Naive thymus-derived CD4-positive, alpha-beta T cell (primary cell): ENCODE measurements at regions of chr3 and their contacts with region 1.

Region 1: GRCh38 chr3:49723628-49724551 is at the start of gene GMPPB:
- DNase-seq: peak; percentile 83 to 95 (median 87)
- ATAC-seq: peak; percentile 85
- H3K4me3 ChIP-seq: peak within 1 kb of the TSS; percentile 89
- H3K4me3 Mint-ChIP-seq: peak within 1 kb of the TSS; percentile 91 to 98 (median 96)
- H3K27ac ChIP-seq: peak within 1 kb of the TSS; percentile 96
- H3K27ac Mint-ChIP-seq: peak within 1 kb of the TSS; percentile 82 to 99 (median 97)
- H3K4me1 ChIP-seq: peaks cover 11 to 17% of the 10 kb centered on the region in 2 donors
- H3K4me1 Mint-ChIP-seq: peaks cover 12 to 37% (median 31%) of the 10 kb centered on the region in 7 donors
- H3K27me3 ChIP-seq: no peaks in the 10 kb centered on the region
- H3K27me3 Mint-ChIP-seq: no peaks in the 10 kb centered on the region
- total RNA-seq, gene GMPPB: 38.3 to 60.4 (median 43.9) TPM

Region 2: GRCh38 chr3:49689046-49689907 is 34.6 kb before region 1 on chr3 and contains the starts of genes MST1 and RNF123:
- CTCF ChIA-PET with region 1: no interaction called
- POLR2A ChIA-PET with region 1: interaction called, 3 read pairs
- intact Hi-C with region 1: loop called (anchors 1 to 5 kb)
- DNase-seq: peak; percentile 89 to 96 (median 93)
- ATAC-seq: peak; percentile 91
- H3K4me3 ChIP-seq: peak within 1 kb of the TSS; percentile 97
- H3K4me3 Mint-ChIP-seq: peak within 1 kb of the TSS; percentile 84 to 99 (median 96)
- H3K27ac ChIP-seq: peak within 1 kb of the TSS; percentile 82
- H3K27ac Mint-ChIP-seq: peak within 1 kb of the TSS; percentile 87 to 99 (median 95)
- H3K4me1 ChIP-seq: peaks cover 6 to 13% of the 10 kb centered on the region in 2 donors
- H3K4me1 Mint-ChIP-seq: peaks cover 20 to 54% (median 41%) of the 10 kb centered on the region in 7 donors
- H3K27me3 ChIP-seq: no peaks in the 10 kb centered on the region
- H3K27me3 Mint-ChIP-seq: peaks cover 0 to 5% (median 0%) of the 10 kb centered on the region in 5 donors
- total RNA-seq, gene MST1: 7.9 to 12.8 (median 10.0) TPM
- total RNA-seq, gene RNF123: 34.5 to 77.2 (median 50.7) TPM

Region 3: DNA sequence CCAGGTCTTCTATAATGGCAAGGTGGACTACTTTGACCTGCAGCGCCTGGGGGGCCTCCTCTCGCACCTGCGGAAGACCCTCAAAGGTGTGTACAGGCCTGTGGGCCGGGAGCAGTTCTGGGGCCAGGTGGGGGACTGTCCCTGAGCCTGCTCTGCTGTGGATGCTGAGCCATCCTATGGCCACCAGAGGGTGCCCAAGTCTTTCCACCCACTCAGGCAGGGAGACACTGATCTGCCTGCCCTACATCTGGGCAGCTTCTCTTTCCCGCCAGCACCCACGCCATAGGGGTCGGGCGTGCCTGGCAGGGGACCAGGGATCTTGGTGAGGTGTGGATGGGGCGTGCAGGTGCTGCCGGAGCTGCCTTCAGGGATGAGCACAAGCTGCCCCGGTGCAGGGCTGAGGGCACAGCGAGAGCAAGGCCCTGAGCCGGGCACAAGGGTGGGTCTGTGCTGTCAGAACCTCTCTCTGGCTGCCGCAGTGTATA is 20.4 kb before region 1 on chr3:
- CTCF ChIA-PET with region 1: interaction called, 3 read pairs
- POLR2A ChIA-PET with region 1: no interaction called
- intact Hi-C with region 1: loop called (anchors 1 kb)
- DNase-seq: peak; percentile 44 to 74 (median 65)
- ATAC-seq: peak; percentile 94
- H3K4me3 ChIP-seq: no peak overlapping the region
- H3K4me3 Mint-ChIP-seq: no peak overlapping the region
- H3K27ac ChIP-seq: no peak overlapping the region
- H3K27ac Mint-ChIP-seq: peak overlapping the region in 2 of 9 donors; percentile 8 to 52
- H3K4me1 ChIP-seq: no peaks in the 10 kb centered on the region
- H3K4me1 Mint-ChIP-seq: peaks cover 0 to 7% (median 0%) of the 10 kb centered on the region in 7 donors
- H3K27me3 ChIP-seq: no peaks in the 10 kb centered on the region
- H3K27me3 Mint-ChIP-seq: no peaks in the 10 kb centered on the region

Region 4: GRCh38 chr3:49786241-49786958 is 62.5 kb after region 1 on chr3 and contains the start of gene IP6K1:
- CTCF ChIA-PET with region 1: no interaction called
- POLR2A ChIA-PET with region 1: interaction called, 5 read pairs
- intact Hi-C with region 1: loop called (anchors 1 kb)
- DNase-seq: peak; percentile 90 to 100 (median 99)
- ATAC-seq: peak; percentile 99
- H3K4me3 ChIP-seq: peak within 1 kb of the TSS; percentile 80
- H3K4me3 Mint-ChIP-seq: peak within 1 kb of the TSS; percentile 91 to 99 (median 94)
- H3K27ac ChIP-seq: peak within 1 kb of the TSS; percentile 95
- H3K27ac Mint-ChIP-seq: peak within 1 kb of the TSS; percentile 96 to 100 (median 99)
- H3K4me1 ChIP-seq: peaks cover 9 to 12% of the 10 kb centered on the region in 2 donors
- H3K4me1 Mint-ChIP-seq: peaks cover 15 to 50% (median 32%) of the 10 kb centered on the region in 7 donors
- H3K27me3 ChIP-seq: no peaks in the 10 kb centered on the region
- H3K27me3 Mint-ChIP-seq: peaks cover 0 to 6% (median 0%) of the 10 kb centered on the region in 5 donors
- total RNA-seq, gene IP6K1: 41.8 to 57.0 (median 47.3) TPM

Region 5: GRCh38 chr3:49839193-49839809 is 115.4 kb after region 1 on chr3:
- CTCF ChIA-PET with region 1: interaction called, 4 read pairs
- POLR2A ChIA-PET with region 1: no interaction called
- intact Hi-C with region 1: loop called in 1 of 2 experiments (anchors 1 kb)
- DNase-seq: peak; percentile 64 to 84 (median 75)
- ATAC-seq: peak; percentile 97
- H3K4me3 ChIP-seq: no peak overlapping the region
- H3K4me3 Mint-ChIP-seq: no peak overlapping the region
- H3K27ac ChIP-seq: no peak overlapping the region
- H3K27ac Mint-ChIP-seq: peak overlapping the region in 1 of 9 donors; percentile 3
- H3K4me1 ChIP-seq: no peaks in the 10 kb centered on the region
- H3K4me1 Mint-ChIP-seq: peaks cover 0 to 9% (median 0%) of the 10 kb centered on the region in 7 donors
- H3K27me3 ChIP-seq: no peaks in the 10 kb centered on the region
- H3K27me3 Mint-ChIP-seq: no peaks in the 10 kb centered on the region

Region 6: GRCh38 chr3:49906004-49906743 is 182.3 kb after region 1 on chr3:
- CTCF ChIA-PET with region 1: no interaction called
- POLR2A ChIA-PET with region 1: no interaction called
- intact Hi-C with region 1: loop called in 1 of 2 experiments (anchors 5 kb)
- DNase-seq: peak; percentile 16 to 60 (median 39)
- ATAC-seq: peak; percentile 53
- H3K4me3 ChIP-seq: no peak overlapping the region
- H3K4me3 Mint-ChIP-seq: peak overlapping the region; percentile 39 to 79 (median 64)
- H3K27ac ChIP-seq: peak overlapping the region; percentile 24
- H3K27ac Mint-ChIP-seq: peak overlapping the region; percentile 63 to 91 (median 87)
- H3K4me1 ChIP-seq: peaks cover 15 to 26% of the 10 kb centered on the region in 2 donors
- H3K4me1 Mint-ChIP-seq: peaks cover 18 to 41% (median 27%) of the 10 kb centered on the region in 7 donors
- H3K27me3 ChIP-seq: no peaks in the 10 kb centered on the region
- H3K27me3 Mint-ChIP-seq: no peaks in the 10 kb centered on the region

Region 7: DNA sequence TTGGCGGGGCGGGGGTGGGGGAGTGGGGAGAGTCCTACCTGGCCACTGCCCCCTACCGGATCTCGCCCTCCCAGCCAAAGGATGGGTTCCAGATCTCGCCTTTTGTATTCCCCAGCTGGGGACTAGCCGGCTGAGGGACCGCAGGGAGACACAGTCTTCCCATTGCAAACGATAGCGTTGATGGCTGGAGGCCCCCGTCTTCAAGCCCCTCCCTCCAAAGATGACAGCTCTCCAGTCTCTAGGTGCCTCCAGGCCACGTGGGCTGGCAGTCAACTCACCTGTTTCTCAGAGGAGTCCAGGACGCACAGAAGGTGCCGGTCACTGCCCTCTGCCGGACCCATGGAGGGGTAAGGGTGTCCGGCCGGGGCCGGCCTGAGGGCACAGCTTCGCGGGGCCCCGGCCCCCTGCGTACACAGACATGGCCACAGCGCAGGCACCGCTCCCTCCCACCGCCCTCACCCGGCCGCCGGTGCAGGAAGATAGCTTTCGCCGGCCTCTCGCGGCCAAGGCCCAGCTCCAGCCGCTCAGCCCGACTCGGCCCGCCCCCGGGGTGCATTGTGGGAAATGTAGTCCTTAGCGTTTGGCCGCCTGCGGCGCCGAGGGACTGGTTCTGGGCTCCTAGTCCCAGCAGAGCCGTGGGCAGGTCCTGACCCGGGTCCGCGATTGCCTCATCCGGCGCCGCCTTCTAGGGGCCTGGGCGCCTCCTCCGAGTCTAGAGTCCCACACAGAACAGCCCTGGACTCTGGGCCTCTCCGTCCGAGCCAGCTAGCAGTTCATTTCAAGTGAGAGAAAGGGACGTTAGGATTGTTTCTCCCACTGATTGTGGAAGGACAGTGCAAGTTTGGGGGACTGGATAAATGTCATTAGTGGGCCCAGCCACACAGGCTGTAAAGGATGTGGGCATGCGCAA is 205.7 kb after region 1 on chr3 and contains the start of gene MON1A:
- CTCF ChIA-PET with region 1: no interaction called
- POLR2A ChIA-PET with region 1: no interaction called
- intact Hi-C with region 1: loop called in 1 of 2 experiments (anchors 5 kb)
- DNase-seq: peak; percentile 65 to 94 (median 74)
- ATAC-seq: peak; percentile 97
- H3K4me3 ChIP-seq: peak within 1 kb of the TSS; percentile 92
- H3K4me3 Mint-ChIP-seq: peak within 1 kb of the TSS; percentile 82 to 90 (median 86)
- H3K27ac ChIP-seq: peak within 1 kb of the TSS; percentile 91
- H3K27ac Mint-ChIP-seq: peak within 1 kb of the TSS; percentile 78 to 92 (median 88)
- H3K4me1 ChIP-seq: peaks cover 6 to 13% of the 10 kb centered on the region in 2 donors
- H3K4me1 Mint-ChIP-seq: peaks cover 6 to 36% (median 31%) of the 10 kb centered on the region in 7 donors
- H3K27me3 ChIP-seq: no peaks in the 10 kb centered on the region
- H3K27me3 Mint-ChIP-seq: no peaks in the 10 kb centered on the region
- total RNA-seq, gene MON1A: 4.6 to 12.6 (median 8.6) TPM

Region 8: DNA sequence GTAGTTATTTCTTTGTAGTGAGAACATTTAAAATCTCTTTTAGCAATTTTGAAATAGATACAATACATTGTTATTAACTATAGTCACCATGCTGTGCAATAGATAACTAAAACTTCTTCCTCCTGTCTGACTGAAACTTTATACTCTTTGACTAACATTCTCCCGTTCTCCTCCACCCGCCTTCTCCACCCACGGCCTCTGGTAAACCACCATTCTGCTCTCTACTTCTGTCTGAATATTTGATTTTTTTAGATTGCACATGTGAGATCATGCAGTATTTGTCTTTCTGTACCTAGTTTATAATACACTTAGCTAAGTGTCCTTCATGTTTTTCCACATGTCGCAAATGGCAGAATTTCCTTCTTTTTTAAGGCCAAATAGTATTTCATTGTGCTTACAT is 292.0 kb after region 1 on chr3:
- CTCF ChIA-PET with region 1: no interaction called
- POLR2A ChIA-PET with region 1: no interaction called
- intact Hi-C with region 1: no loop called
- DNase-seq: no peak
- ATAC-seq: no peak
- H3K4me3 ChIP-seq: no peak overlapping the region
- H3K4me3 Mint-ChIP-seq: no peak overlapping the region
- H3K27ac ChIP-seq: no peak overlapping the region
- H3K27ac Mint-ChIP-seq: no peak overlapping the region
- H3K4me1 ChIP-seq: no peaks in the 10 kb centered on the region
- H3K4me1 Mint-ChIP-seq: peaks cover 0 to 8% (median 6%) of the 10 kb centered on the region in 7 donors
- H3K27me3 ChIP-seq: no peaks in the 10 kb centered on the region
- H3K27me3 Mint-ChIP-seq: no peaks in the 10 kb centered on the region

Region 9: GRCh38 chr3:50088725-50089608 is 365.1 kb after region 1 on chr3 and contains the start of gene RBM5:
- CTCF ChIA-PET with region 1: no interaction called
- POLR2A ChIA-PET with region 1: no interaction called
- intact Hi-C with region 1: no loop called
- DNase-seq: peak; percentile 71 to 91 (median 89)
- ATAC-seq: peak; percentile 100
- H3K4me3 ChIP-seq: peak within 1 kb of the TSS; percentile 88
- H3K4me3 Mint-ChIP-seq: peak within 1 kb of the TSS; percentile 94 to 98 (median 96)
- H3K27ac ChIP-seq: peak within 1 kb of the TSS; percentile 98
- H3K27ac Mint-ChIP-seq: peak within 1 kb of the TSS; percentile 94 to 99 (median 97)
- H3K4me1 ChIP-seq: peaks cover 16 to 23% of the 10 kb centered on the region in 2 donors
- H3K4me1 Mint-ChIP-seq: peaks cover 24 to 36% (median 32%) of the 10 kb centered on the region in 7 donors
- H3K27me3 ChIP-seq: no peaks in the 10 kb centered on the region
- H3K27me3 Mint-ChIP-seq: no peaks in the 10 kb centered on the region
- total RNA-seq, gene RBM5: 223 to 420 (median 342) TPM